Transverse colon (tissue), 4 donors: ENCODE measurements at regions of chr2 and their contacts with region 1.

Region 1: GRCh38 chr2:199985625-199986207 is 30.3 kb downstream of the MAIP1 start:
- DNase-seq: peak; percentile 78
- H3K4me3 ChIP-seq: no peak overlapping the region
- H3K27ac ChIP-seq: no peak overlapping the region
- H3K4me1 ChIP-seq: peaks cover 0 to 5% (median 2%) of the 10 kb centered on the region in 4 donors
- H3K27me3 ChIP-seq: no peaks in the 10 kb centered on the region
- CTCF ChIP-seq: peak; percentile 56 to 73 (median 67)
- EP300 ChIP-seq: no peak
- POLR2A ChIP-seq: no peak

Region 2: DNA sequence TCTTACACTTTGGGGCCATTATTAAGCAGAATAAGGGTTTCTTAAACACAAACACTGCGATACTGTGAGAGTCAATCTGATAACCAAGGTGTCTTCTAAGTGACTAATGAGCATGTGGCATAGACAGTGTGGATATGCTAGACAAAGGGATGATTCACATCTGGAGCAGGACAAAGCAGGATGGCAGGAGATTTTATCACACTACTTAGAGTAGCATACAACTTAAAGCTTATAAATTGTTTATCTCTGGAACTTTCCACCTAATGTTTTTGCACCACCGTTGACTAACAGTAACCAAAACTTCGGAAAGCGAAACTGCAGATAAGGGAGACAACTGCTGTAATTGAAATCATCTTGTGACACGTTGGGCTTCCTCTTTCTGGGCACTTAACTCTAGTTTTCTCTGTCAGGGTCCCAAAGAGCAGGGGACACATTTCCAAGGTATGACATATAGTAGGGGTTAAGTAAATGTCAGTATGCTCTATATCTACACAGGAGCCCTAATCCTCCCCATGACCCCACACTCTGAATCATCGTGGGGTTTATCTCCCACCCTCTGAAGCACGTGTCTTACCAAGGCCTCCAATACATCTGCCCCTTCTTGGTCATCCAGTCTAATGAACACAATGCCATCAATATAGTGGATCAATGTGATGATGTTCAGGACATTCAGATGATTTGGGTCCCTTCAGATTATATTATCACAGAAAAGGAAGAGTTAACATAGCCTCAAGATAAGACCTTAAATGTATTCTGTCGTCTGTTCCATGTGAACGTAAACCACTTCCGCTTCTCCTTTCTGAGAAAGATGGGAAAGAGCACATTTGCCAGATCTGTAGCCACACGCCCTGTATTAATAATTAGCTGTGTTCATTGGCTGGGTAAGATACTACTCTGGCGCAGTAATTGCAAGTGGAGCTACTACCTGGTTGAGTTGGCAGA is 213.4 kb before region 1 on chr2:
- in situ Hi-C with region 1: no loop called
- intact Hi-C with region 1: no loop called
- DNase-seq: no peak
- H3K4me3 ChIP-seq: no peak overlapping the region
- H3K27ac ChIP-seq: no peak overlapping the region
- H3K4me1 ChIP-seq: no peaks in the 10 kb centered on the region
- H3K27me3 ChIP-seq: no peaks in the 10 kb centered on the region
- CTCF ChIP-seq: no peak
- EP300 ChIP-seq: no peak
- POLR2A ChIP-seq: no peak

Region 3: GRCh38 chr2:199966976-199967375 is 18.7 kb before region 1 on chr2:
- in situ Hi-C with region 1: no loop called
- intact Hi-C with region 1: no loop called
- DNase-seq: no peak
- H3K4me3 ChIP-seq: no peak overlapping the region
- H3K27ac ChIP-seq: no peak overlapping the region
- H3K4me1 ChIP-seq: peaks cover 0 to 3% (median 0%) of the 10 kb centered on the region in 4 donors
- H3K27me3 ChIP-seq: no peaks in the 10 kb centered on the region
- CTCF ChIP-seq: no peak
- EP300 ChIP-seq: no peak
- POLR2A ChIP-seq: no peak

Region 4: DNA sequence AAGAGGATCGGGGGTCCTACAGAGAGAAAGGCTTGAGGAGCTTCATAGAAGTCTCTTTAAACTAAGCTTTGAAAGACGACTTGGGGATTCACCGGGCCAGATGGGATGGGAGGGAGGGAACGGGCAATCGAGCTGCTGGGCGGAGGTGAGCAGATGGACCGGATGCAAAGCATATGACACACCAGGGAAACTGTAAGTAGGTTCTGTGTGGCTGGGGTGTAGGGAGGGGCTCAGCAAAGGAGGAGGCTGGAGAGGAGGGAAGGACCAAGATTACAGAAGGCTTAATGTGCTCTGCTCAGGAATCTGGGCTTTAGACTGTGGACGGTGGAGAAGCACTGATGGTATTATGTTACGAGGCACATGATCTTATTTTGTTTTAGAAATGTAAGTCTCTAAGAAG is 101.2 kb after region 1 on chr2:
- in situ Hi-C with region 1: no loop called
- intact Hi-C with region 1: no loop called
- DNase-seq: no peak
- H3K4me3 ChIP-seq: no peak overlapping the region
- H3K27ac ChIP-seq: no peak overlapping the region
- H3K4me1 ChIP-seq: no peaks in the 10 kb centered on the region
- H3K27me3 ChIP-seq: no peaks in the 10 kb centered on the region
- CTCF ChIP-seq: no peak
- EP300 ChIP-seq: no peak
- POLR2A ChIP-seq: no peak

Region 5: GRCh38 chr2:200274116-200275075 is 288.7 kb after region 1 on chr2:
- in situ Hi-C with region 1: loop called in 1 of 4 experiments (anchors 25 kb)
- intact Hi-C with region 1: no loop called
- DNase-seq: no peak
- H3K4me3 ChIP-seq: no peak overlapping the region
- H3K27ac ChIP-seq: no peak overlapping the region
- H3K4me1 ChIP-seq: no peaks in the 10 kb centered on the region
- H3K27me3 ChIP-seq: no peaks in the 10 kb centered on the region
- CTCF ChIP-seq: no peak
- EP300 ChIP-seq: no peak
- POLR2A ChIP-seq: no peak

Region 6: DNA sequence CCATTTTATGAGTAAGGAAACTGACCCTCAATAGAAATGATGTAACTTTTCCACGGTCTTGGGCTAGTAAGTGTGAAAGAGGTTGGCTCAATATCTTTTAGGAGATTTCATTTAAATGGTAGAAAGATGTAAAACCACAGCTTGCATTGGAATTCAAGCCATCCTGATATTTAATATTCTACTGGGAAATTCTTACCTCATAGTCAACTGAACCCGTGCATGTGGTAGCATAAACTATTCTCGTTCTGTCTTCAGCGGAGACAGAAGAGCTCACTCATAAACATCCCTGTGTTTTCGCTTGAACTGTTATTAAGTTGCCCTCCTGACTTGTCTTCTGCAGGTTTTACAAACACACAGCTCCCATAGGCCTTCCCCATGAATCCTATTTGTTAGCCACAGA is 312.3 kb after region 1 on chr2:
- in situ Hi-C with region 1: loop called in 3 of 4 experiments (anchors 10 to 25 kb)
- intact Hi-C with region 1: no loop called
- DNase-seq: no peak
- H3K4me3 ChIP-seq: no peak overlapping the region
- H3K27ac ChIP-seq: no peak overlapping the region
- H3K4me1 ChIP-seq: no peaks in the 10 kb centered on the region
- H3K27me3 ChIP-seq: no peaks in the 10 kb centered on the region
- CTCF ChIP-seq: no peak
- EP300 ChIP-seq: no peak
- POLR2A ChIP-seq: no peak